CD4-positive, alpha-beta T cell (primary cell): ENCODE measurements at regions of chr6 and their contacts with region 1.

Region 1: DNA sequence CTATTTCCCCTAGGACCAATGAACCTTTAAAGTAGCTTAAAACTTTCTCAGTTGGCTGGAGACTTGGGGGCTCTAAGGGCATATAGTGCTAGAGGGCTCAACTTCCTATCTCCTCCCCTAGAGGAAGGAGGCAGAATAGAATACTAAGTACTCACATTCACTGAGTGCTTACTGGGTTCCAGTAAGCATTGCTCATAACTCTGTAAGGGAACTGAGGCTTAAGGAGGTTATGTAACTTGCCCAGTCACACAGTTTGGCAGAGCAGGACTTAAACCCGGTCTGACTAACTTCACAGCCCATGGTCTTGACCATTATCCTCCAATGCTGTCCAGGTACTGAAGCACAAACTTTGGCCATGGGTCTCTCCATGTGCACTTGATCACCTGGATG is 12.5 kb downstream of the SESN1 start:
- DNase-seq: no peak
- ATAC-seq: peak; percentile 21
- H3K4me3 ChIP-seq: no peak overlapping the region
- H3K4me3 Mint-ChIP-seq: no peak overlapping the region
- H3K27ac ChIP-seq: no peak overlapping the region
- H3K27ac Mint-ChIP-seq: no peak overlapping the region
- H3K4me1 ChIP-seq: no peaks in the 10 kb centered on the region
- H3K4me1 Mint-ChIP-seq: peaks cover 1% of the 10 kb centered on the region
- H3K27me3 ChIP-seq: no peaks in the 10 kb centered on the region
- H3K27me3 Mint-ChIP-seq: no peaks in the 10 kb centered on the region
- CTCF ChIP-seq: no peak

Region 2: GRCh38 chr6:108896111-108896661 is 186.0 kb before region 1 on chr6:
- CTCF ChIA-PET with region 1: no interaction called
- POLR2A ChIA-PET with region 1: no interaction called
- intact Hi-C with region 1: loop called in 1 of 2 experiments (anchors 5 kb)
- DNase-seq: peak in 3 of 14 experiments; percentile 70 to 87 (median 75)
- ATAC-seq: peak; percentile 69
- H3K4me3 ChIP-seq: no peak overlapping the region
- H3K4me3 Mint-ChIP-seq: peak overlapping the region; percentile 59
- H3K27ac ChIP-seq: peak overlapping the region in 1 of 2 donors; percentile 30
- H3K27ac Mint-ChIP-seq: peak overlapping the region; percentile 50
- H3K4me1 ChIP-seq: peaks cover 40% of the 10 kb centered on the region
- H3K4me1 Mint-ChIP-seq: peaks cover 36% of the 10 kb centered on the region
- H3K27me3 ChIP-seq: no peaks in the 10 kb centered on the region
- H3K27me3 Mint-ChIP-seq: no peaks in the 10 kb centered on the region
- CTCF ChIP-seq: no peak